ENCODE measurements at regions of chr10 and their contacts with region 1.

Region 1: GRCh38 chr10:99620713-99621453 is 644 bp upstream of the SLC25A28 start:
- DNase-seq: peak; percentile 95 to 97 (median 96)
- H3K4me3 ChIP-seq: peak overlapping the region; percentile 88
- H3K27ac ChIP-seq: peak overlapping the region; percentile 83 to 99
- H3K4me1 ChIP-seq: peaks cover 7% of the 10 kb centered on the region
- H3K27me3 ChIP-seq: no peaks in the 10 kb centered on the region
- CTCF ChIP-seq: no peak
- EP300 ChIP-seq: peak; percentile 90
- POLR2A ChIP-seq: peak; percentile 64

Region 2: GRCh38 chr10:99732033-99732912 is 111.4 kb after region 1 on chr10 and contains the starts of genes COX15 and CUTC:
- intact Hi-C with region 1: loop called in 1 of 4 experiments (anchors 10 kb)
- DNase-seq: peak; percentile 96 to 99 (median 97)
- H3K4me3 ChIP-seq: peak within 1 kb of the TSS; percentile 78
- H3K27ac ChIP-seq: peak within 1 kb of the TSS; percentile 82 to 91
- H3K4me1 ChIP-seq: peaks cover 6% of the 10 kb centered on the region
- H3K27me3 ChIP-seq: no peaks in the 10 kb centered on the region
- CTCF ChIP-seq: peak in 1 of 3 donors; percentile 25
- EP300 ChIP-seq: no peak
- POLR2A ChIP-seq: peak; percentile 60
- total RNA-seq, gene COX15: 25.2 to 39.7 (median 36.5) TPM
- total RNA-seq, gene CUTC: 12.4 to 15.0 (median 13.9) TPM